ENCODE measurements at regions of chr11 and their contacts with region 1.

Region 1: DNA sequence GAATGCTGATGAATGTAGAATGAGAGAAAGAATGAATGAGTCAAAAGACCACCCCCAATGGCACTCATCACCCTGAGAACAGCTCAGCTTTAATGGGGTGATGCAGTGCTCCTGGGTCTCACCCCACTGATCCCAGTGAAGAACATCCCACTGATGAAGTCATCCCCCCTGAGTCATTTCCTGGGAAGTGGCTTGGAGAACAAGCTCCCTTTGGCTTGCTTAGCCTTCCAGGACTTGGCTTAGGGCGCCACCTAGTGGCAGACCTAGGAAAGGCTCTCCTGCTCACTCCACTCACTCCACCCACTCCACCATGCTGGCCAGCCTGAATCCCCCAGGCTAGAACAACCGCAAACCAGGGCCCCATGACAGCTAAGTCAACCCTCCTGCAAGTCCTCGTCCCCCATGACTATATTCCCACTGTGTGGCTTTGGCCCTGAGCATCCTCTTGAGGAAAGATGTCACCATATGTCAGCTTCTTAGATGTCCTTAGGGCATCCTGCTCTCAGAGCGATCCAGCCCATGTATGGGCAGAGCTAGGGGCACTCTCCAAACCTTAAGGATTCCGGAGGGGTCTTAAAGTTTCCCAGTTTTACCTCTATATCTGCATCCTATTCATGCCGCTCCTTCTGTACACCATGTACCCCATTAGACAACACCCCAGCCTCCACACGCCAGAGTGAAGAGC is 17.8 kb upstream of the TMPRSS13 start:
- H3K4me3 ChIP-seq: no peak overlapping the region
- H3K27ac ChIP-seq: no peak overlapping the region
- H3K4me1 ChIP-seq: no peaks in the 10 kb centered on the region
- CTCF ChIP-seq: peak; percentile 89

Region 2: DNA sequence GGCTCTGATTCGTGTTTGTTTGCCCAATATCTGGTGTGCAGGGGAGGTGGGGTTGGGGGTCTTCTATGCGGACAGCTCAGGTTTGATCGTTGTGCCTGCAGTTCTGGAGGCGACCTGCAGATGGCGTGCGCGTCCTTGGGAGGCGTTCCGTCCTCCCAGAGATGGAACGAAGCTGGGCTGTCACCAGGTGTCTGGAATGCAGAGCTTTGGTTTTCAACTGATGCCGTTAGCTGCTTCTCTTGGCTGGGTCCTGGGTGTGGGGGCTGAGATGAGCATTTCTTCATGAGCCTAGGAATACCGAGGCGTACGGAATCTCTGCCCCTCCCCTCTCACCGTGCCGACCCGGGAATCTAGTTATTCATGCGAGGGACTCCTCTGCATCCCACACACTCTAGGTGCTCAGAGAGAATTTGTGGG is 520.7 kb before region 1 on chr11:
- CTCF ChIA-PET with region 1: interaction called, 17 read pairs
- POLR2A ChIA-PET with region 1: no interaction called
- H3K4me3 ChIP-seq: no peak overlapping the region
- H3K27ac ChIP-seq: no peak overlapping the region
- H3K4me1 ChIP-seq: no peaks in the 10 kb centered on the region
- CTCF ChIP-seq: peak; percentile 82

Region 3: GRCh38 chr11:117828611-117829368 is 118.2 kb before region 1 on chr11:
- CTCF ChIA-PET with region 1: interaction called, 223 read pairs
- POLR2A ChIA-PET with region 1: no interaction called
- H3K4me3 ChIP-seq: no peak overlapping the region
- H3K27ac ChIP-seq: no peak overlapping the region
- H3K4me1 ChIP-seq: no peaks in the 10 kb centered on the region
- CTCF ChIP-seq: no peak

Region 4: DNA sequence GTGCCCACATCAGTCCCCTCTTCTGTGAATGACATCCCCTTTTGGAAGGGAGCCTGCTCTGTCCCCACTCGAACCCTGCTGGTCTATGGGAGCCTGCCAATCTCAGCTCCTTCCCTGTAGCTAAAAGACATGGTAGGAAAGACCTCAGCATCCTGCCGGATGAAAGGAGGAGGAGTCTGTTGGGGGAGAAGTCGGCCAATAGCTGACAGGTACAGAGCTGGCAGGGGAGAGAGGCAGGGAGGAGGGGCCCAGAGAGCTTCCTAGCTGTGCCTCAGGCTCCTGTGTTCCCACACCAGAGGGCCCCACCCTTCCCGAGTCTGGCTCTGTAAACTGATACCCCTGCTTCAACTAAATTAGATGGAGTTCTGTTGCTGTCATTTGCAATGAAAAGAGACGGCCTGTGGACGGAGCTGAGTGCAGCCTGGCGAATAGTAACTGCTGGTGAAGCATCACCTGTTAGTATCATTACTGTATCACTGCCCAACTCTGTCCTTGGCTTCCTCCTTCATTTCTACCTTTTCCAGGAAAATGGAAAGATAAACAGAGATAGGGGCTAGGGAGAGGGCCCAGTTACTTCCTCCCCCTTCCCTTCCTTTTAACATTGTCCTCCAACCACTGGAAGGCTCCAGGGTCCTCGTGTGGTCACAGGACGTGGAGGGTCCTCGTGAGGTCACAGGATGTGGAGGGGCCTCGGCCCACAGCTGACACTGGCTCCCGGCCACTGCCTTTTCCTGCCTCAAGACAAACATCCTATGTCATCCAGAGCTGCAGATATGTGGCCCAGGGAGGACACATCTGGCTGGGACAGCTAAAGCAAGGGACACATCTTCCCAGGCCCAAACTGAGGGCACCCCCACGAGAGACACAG is 85.6 kb before region 1 on chr11:
- CTCF ChIA-PET with region 1: interaction called, 12 read pairs
- POLR2A ChIA-PET with region 1: no interaction called
- H3K4me3 ChIP-seq: no peak overlapping the region
- H3K27ac ChIP-seq: no peak overlapping the region; the same call in 1 of the 2 replicates
- H3K4me1 ChIP-seq: peaks cover 4% of the 10 kb centered on the region
- CTCF ChIP-seq: no peak

Region 5: GRCh38 chr11:117907251-117907981 is 39.6 kb before region 1 on chr11:
- CTCF ChIA-PET with region 1: interaction called, 16 read pairs
- POLR2A ChIA-PET with region 1: interaction called, 4 read pairs
- H3K4me3 ChIP-seq: no peak overlapping the region
- H3K27ac ChIP-seq: no peak overlapping the region
- H3K4me1 ChIP-seq: no peaks in the 10 kb centered on the region
- CTCF ChIP-seq: no peak

Region 6: GRCh38 chr11:118051611-118052461 is 104.9 kb after region 1 on chr11:
- CTCF ChIA-PET with region 1: interaction called, 100 read pairs
- POLR2A ChIA-PET with region 1: no interaction called
- H3K4me3 ChIP-seq: no peak overlapping the region
- H3K27ac ChIP-seq: no peak overlapping the region
- H3K4me1 ChIP-seq: no peaks in the 10 kb centered on the region
- CTCF ChIP-seq: no peak